ENCODE measurements at regions of chr13 and their contacts with region 1.

Region 1: DNA sequence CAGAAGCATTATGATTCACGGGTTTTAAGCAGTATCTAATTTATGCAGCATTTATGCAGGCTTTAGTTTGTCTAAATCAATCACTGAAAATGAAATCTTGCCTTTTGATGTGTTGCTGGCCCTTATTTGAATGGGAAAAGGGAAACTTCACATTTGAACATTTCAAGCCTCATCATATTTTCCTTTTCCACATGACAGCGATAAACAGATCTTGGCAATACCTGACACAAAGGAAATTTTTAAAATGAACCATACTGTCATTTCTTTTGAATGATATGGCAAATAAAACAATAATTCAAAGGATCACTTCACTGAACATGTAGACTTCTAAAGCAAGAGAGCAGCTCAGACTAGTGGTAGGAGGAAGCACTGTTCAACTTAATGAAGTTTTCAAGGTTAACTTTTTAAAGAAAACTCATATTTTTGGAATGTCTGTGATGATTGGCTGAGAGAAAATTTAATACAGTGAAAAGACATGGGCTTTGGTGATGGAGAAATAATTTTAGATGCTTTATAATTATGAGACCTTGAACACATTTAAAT is 198.1 kb downstream of the OXGR1 start:
- DNase-seq: no peak
- ATAC-seq: no peak
- H3K4me3 ChIP-seq: no peak overlapping the region
- H3K27ac ChIP-seq: no peak overlapping the region
- H3K4me1 ChIP-seq: no peaks in the 10 kb centered on the region
- H3K27me3 ChIP-seq: no peaks in the 10 kb centered on the region

Region 2: DNA sequence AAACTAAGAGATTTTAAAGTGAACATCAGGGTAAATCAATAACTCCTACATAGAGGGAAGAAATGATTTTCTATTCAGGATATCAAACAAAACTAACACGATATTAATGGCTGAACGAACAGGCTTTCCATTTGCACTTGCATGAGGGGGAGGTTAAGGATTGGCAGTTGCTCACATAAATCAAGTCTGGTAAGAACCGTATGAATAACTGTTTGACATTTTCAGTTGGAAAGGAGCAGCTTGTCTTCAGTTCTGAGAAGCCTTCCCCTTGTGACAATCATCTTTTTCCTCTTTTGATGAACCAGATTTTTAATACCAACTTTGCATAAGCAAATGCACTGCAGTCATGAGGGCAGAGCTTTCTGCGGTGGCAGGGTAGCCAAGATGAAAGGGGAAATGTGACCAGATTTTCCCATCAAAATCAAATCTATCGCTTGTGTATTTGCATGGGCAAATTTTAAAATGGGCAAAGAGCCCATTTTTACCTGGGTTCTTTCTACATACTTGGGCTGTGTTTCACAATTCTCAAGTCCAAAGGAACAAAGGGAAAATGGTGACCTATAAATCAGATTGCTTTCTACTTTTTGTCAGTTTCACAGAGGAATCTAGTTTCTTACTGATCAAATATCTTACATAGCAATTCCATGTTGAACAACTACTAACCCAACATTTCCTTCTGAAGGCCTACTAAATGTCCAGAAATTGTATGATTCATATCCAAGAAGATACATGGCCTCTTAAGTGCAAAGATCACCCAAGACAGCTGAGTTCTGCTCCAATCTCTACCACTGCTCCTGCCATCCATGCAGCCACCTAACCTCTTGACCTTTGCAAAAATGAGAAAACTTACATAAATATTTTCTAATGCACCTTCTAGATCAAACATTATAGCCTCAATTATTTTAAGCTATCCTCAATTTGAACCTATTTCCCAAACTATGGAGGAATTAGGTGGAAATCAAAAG is 51.5 kb before region 1 on chr13:
- intact Hi-C with region 1: loop called in 1 of 2 experiments (anchors 10 kb)
- DNase-seq: no peak
- ATAC-seq: no peak
- H3K4me3 ChIP-seq: no peak overlapping the region
- H3K27ac ChIP-seq: no peak overlapping the region
- H3K4me1 ChIP-seq: no peaks in the 10 kb centered on the region
- H3K27me3 ChIP-seq: no peaks in the 10 kb centered on the region

Region 3: GRCh38 chr13:96860882-96861281 is 64.7 kb after region 1 on chr13:
- intact Hi-C with region 1: no loop called
- DNase-seq: no peak
- ATAC-seq: no peak
- H3K4me3 ChIP-seq: no peak overlapping the region
- H3K27ac ChIP-seq: no peak overlapping the region
- H3K4me1 ChIP-seq: no peaks in the 10 kb centered on the region
- H3K27me3 ChIP-seq: no peaks in the 10 kb centered on the region